CD4-positive, alpha-beta memory T cell (primary cell): ENCODE measurements at regions of chr11 and their contacts with region 1.

Region 1: GRCh38 chr11:1832211-1832919 is 2.4 kb upstream of the SYT8 start:
- DNase-seq: peak; percentile 33 to 71 (median 57)
- H3K4me3 ChIP-seq: no peak overlapping the region
- H3K4me3 Mint-ChIP-seq: no peak overlapping the region
- H3K27ac ChIP-seq: no peak overlapping the region
- H3K27ac Mint-ChIP-seq: peak overlapping the region in 1 of 7 donors; percentile 53
- H3K4me1 ChIP-seq: peaks cover 5% of the 10 kb centered on the region
- H3K4me1 Mint-ChIP-seq: no peaks in the 10 kb centered on the region
- H3K27me3 ChIP-seq: no peaks in the 10 kb centered on the region
- H3K27me3 Mint-ChIP-seq: peaks cover 7 to 14% of the 10 kb centered on the region in 2 donors

Region 2: DNA sequence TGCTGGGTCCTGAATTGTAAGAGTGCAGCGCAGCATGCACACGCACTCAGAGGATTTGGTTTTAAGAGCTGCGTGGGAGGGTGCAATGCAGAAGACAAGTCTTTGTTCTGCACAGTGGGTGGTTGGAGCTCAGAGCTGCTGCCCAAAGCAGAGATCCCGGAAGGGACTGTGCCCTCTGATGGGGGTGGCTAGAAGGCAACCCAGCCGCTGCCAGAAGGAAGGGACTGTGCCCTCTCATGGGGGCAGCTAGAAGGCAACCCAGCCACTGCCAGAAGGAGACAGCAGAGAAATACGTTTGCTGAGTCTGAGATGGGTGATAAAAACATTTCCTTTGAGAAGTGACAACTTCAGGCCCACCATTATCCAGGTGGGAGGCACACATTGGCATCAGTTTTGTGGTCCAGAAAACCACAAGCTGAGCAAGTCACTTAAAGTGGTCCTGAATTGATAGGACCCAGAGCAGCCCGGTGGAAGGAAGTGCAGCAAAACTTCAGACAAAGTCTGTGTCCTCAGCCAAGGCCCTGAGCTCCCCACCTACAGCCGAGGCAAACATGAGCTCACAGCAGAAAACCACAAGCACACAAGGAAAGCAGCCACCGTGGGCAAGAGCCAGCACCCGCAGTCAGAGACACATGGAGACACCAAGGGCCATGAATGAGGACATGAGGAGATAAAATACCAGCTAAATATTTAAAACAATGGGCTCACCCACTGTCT is 131.1 kb before region 1 on chr11:
- CTCF ChIA-PET with region 1: interaction called, 32 read pairs
- POLR2A ChIA-PET with region 1: no interaction called
- intact Hi-C with region 1: no loop called
- DNase-seq: no peak
- H3K4me3 ChIP-seq: no peak overlapping the region
- H3K4me3 Mint-ChIP-seq: peak overlapping the region in 1 of 8 donors; percentile 31
- H3K27ac ChIP-seq: no peak overlapping the region
- H3K27ac Mint-ChIP-seq: peak overlapping the region in 3 of 7 donors; percentile 7 to 69 (median 16)
- H3K4me1 ChIP-seq: no peaks in the 10 kb centered on the region
- H3K4me1 Mint-ChIP-seq: peaks cover 0 to 14% (median 10%) of the 10 kb centered on the region in 4 donors
- H3K27me3 ChIP-seq: no peaks in the 10 kb centered on the region
- H3K27me3 Mint-ChIP-seq: peaks cover 2 to 18% of the 10 kb centered on the region in 2 donors

Region 3: GRCh38 chr11:1706634-1707400 is 125.5 kb before region 1 on chr11:
- CTCF ChIA-PET with region 1: interaction called, 32 read pairs
- POLR2A ChIA-PET with region 1: no interaction called
- intact Hi-C with region 1: no loop called
- DNase-seq: peak in 2 of 5 donors; percentile 11 to 19
- H3K4me3 ChIP-seq: no peak overlapping the region
- H3K4me3 Mint-ChIP-seq: peak overlapping the region in 1 of 8 donors; percentile 20
- H3K27ac ChIP-seq: no peak overlapping the region
- H3K27ac Mint-ChIP-seq: peak overlapping the region in 1 of 7 donors; percentile 30
- H3K4me1 ChIP-seq: no peaks in the 10 kb centered on the region
- H3K4me1 Mint-ChIP-seq: peaks cover 0 to 3% (median under 1%) of the 10 kb centered on the region in 4 donors
- H3K27me3 ChIP-seq: no peaks in the 10 kb centered on the region
- H3K27me3 Mint-ChIP-seq: peaks cover 5 to 18% of the 10 kb centered on the region in 2 donors

Region 4: GRCh38 chr11:1782831-1783724 is 49.3 kb before region 1 on chr11:
- CTCF ChIA-PET with region 1: no interaction called
- POLR2A ChIA-PET with region 1: no interaction called
- intact Hi-C with region 1: no loop called
- DNase-seq: no peak
- H3K4me3 ChIP-seq: no peak overlapping the region
- H3K4me3 Mint-ChIP-seq: no peak overlapping the region
- H3K27ac ChIP-seq: no peak overlapping the region
- H3K27ac Mint-ChIP-seq: no peak overlapping the region
- H3K4me1 ChIP-seq: no peaks in the 10 kb centered on the region
- H3K4me1 Mint-ChIP-seq: no peaks in the 10 kb centered on the region
- H3K27me3 ChIP-seq: no peaks in the 10 kb centered on the region
- H3K27me3 Mint-ChIP-seq: no peaks in the 10 kb centered on the region